CD8-positive, alpha-beta T cell (primary cell): ENCODE measurements at regions of chr14 and their contacts with region 1.

Region 1: GRCh38 chr14:94180655-94181271 is 6.6 kb downstream of the PPP4R4 start:
- DNase-seq: peak in 3 of 9 experiments; percentile 32 to 76 (median 68)
- ATAC-seq: peak; percentile 86
- H3K4me3 ChIP-seq: no peak overlapping the region
- H3K4me3 Mint-ChIP-seq: peak overlapping the region; percentile 49
- H3K27ac ChIP-seq: no peak overlapping the region
- H3K27ac Mint-ChIP-seq: peak overlapping the region; percentile 63
- H3K4me1 ChIP-seq: no peaks in the 10 kb centered on the region
- H3K4me1 Mint-ChIP-seq: peaks cover 9% of the 10 kb centered on the region
- H3K27me3 ChIP-seq: peaks cover 0 to 2% of the 10 kb centered on the region in 2 experiments
- H3K27me3 Mint-ChIP-seq: peaks cover 15% of the 10 kb centered on the region
- CTCF ChIP-seq: peak; percentile 81

Region 2: GRCh38 chr14:93332853-93333630 is 847.7 kb before region 1 on chr14 and contains the start of gene BTBD7:
- CTCF ChIA-PET with region 1: no interaction called
- POLR2A ChIA-PET with region 1: no interaction called
- intact Hi-C with region 1: loop called in 1 of 2 experiments (anchors 10 kb)
- DNase-seq: peak; percentile 87 to 98 (median 94)
- ATAC-seq: peak; percentile 92
- H3K4me3 ChIP-seq: peak within 1 kb of the TSS; percentile 81 to 85
- H3K4me3 Mint-ChIP-seq: peak within 1 kb of the TSS; percentile 95
- H3K27ac ChIP-seq: peak within 1 kb of the TSS; percentile 80 to 83
- H3K27ac Mint-ChIP-seq: peak within 1 kb of the TSS; percentile 95
- H3K4me1 ChIP-seq: peaks cover 27% of the 10 kb centered on the region
- H3K4me1 Mint-ChIP-seq: peaks cover 50% of the 10 kb centered on the region
- H3K27me3 ChIP-seq: no peaks in the 10 kb centered on the region
- H3K27me3 Mint-ChIP-seq: no peaks in the 10 kb centered on the region
- CTCF ChIP-seq: no peak
- total RNA-seq, gene BTBD7: 22.9 to 23.5 TPM

Region 3: DNA sequence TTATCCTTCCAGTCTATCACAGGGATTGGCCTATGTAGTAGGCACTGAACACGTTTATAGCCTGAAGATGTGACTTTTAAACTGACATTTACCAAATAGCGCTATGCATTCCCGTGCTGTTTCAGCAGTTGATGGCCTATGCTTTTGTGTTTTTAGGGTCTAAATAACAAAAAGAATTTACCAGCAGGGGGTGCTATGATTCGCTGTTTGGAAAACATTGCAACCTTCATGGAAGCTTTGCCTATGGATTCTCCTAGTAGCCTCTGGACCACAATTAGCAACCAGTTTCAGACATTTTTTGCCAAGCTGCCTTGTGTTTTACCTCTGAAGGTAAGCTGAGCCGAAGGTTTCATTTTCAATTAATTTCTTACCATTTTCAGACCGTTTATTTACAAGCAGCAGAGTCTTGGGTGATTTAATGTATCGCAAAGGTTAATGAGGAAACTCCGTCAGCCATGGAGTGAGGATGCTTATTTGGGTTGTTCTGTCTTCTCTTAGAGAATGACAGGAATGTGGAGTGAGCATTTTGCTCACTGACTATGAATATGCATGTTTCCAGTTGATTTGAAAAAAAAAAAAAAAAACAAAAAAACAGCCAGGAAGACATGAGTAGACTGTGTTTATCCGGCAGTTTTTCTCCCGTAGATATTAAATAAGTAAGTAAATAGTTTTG is 525.5 kb before region 1 on chr14:
- CTCF ChIA-PET with region 1: no interaction called
- POLR2A ChIA-PET with region 1: no interaction called
- intact Hi-C with region 1: loop called in 1 of 2 experiments (anchors 10 kb)
- DNase-seq: peak in 2 of 9 experiments; percentile 4 to 6
- ATAC-seq: no peak
- H3K4me3 ChIP-seq: no peak overlapping the region
- H3K4me3 Mint-ChIP-seq: no peak overlapping the region
- H3K27ac ChIP-seq: no peak overlapping the region
- H3K27ac Mint-ChIP-seq: no peak overlapping the region
- H3K4me1 ChIP-seq: no peaks in the 10 kb centered on the region
- H3K4me1 Mint-ChIP-seq: no peaks in the 10 kb centered on the region
- H3K27me3 ChIP-seq: peaks cover 3 to 8% of the 10 kb centered on the region in 2 experiments
- H3K27me3 Mint-ChIP-seq: peaks cover 25% of the 10 kb centered on the region
- CTCF ChIP-seq: no peak

Region 4: DNA sequence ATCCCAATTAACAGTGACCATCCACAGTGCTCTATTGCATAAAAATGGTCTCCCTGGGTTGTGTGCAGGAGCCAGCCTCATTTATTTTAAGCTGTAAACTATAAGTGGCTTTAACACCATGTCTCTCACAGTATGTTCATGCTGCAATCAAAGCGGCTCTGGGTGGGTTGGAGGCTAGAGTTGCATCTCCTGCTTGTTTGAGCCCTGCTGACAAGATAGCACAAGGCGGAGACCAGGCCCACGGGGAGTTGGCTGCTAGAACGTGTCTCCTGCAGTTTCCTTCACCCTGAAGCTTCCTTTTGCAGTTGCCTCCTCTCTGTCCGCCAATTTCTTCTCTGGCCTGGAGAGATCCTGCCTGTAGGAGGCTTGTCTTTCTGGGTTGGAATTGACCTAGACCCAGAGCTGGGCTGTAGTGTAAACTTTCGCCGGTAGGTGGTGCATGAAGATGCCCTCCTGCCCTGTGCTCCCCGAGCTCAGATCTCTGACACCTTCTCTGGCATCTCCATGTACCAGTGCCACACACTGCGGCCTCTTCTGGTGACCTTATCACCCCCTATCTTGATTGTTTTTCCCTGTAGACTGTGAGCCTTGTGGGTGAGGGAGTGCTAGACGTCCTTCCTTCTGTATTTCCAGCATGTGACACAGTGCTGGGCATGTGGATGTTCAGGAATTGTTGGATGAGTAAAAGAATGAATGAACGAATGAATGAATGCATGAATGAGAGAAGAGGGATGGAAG is 144.3 kb before region 1 on chr14:
- CTCF ChIA-PET with region 1: interaction called, 116 read pairs
- POLR2A ChIA-PET with region 1: interaction called, 3 read pairs
- intact Hi-C with region 1: loop called (anchors 1 kb)
- DNase-seq: peak; percentile 52 to 84 (median 78)
- ATAC-seq: peak; percentile 99
- H3K4me3 ChIP-seq: no peak overlapping the region
- H3K4me3 Mint-ChIP-seq: no peak overlapping the region
- H3K27ac ChIP-seq: no peak overlapping the region
- H3K27ac Mint-ChIP-seq: no peak overlapping the region
- H3K4me1 ChIP-seq: no peaks in the 10 kb centered on the region
- H3K4me1 Mint-ChIP-seq: peaks cover 3% of the 10 kb centered on the region
- H3K27me3 ChIP-seq: no peaks in the 10 kb centered on the region
- H3K27me3 Mint-ChIP-seq: no peaks in the 10 kb centered on the region
- CTCF ChIP-seq: peak; percentile 82

Region 5: GRCh38 chr14:94161981-94162380 is 18.8 kb before region 1 on chr14:
- CTCF ChIA-PET with region 1: interaction called, 15 read pairs
- POLR2A ChIA-PET with region 1: no interaction called
- intact Hi-C with region 1: no loop called
- DNase-seq: peak in 1 of 9 experiments; percentile 8
- ATAC-seq: no peak
- H3K4me3 ChIP-seq: no peak overlapping the region
- H3K4me3 Mint-ChIP-seq: no peak overlapping the region
- H3K27ac ChIP-seq: no peak overlapping the region
- H3K27ac Mint-ChIP-seq: no peak overlapping the region
- H3K4me1 ChIP-seq: peaks cover 39% of the 10 kb centered on the region
- H3K4me1 Mint-ChIP-seq: peaks cover 37% of the 10 kb centered on the region
- H3K27me3 ChIP-seq: no peaks in the 10 kb centered on the region
- H3K27me3 Mint-ChIP-seq: peaks cover 7% of the 10 kb centered on the region
- CTCF ChIP-seq: no peak

Region 6: DNA sequence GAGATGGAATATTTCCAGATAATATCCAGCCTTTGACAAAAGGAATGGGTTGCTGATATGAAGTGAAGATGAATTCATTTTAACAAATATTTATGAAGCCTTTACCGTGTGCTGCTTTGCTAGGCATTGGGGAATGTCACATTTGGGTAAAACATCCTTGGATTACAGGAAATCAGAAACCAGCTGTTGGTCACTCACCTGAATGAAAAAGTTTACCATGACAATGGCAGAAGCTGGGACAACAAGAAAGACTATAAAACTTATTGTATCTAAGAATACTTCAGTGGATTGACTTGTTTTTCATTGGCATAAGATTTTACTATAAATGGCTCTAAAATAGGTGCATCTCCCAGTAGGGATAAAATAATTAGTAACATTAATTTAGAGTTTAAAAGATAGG is 13.0 kb after region 1 on chr14:
- CTCF ChIA-PET with region 1: interaction called, 10 read pairs
- POLR2A ChIA-PET with region 1: no interaction called
- intact Hi-C with region 1: no loop called
- DNase-seq: no peak
- ATAC-seq: no peak
- H3K4me3 ChIP-seq: no peak overlapping the region
- H3K4me3 Mint-ChIP-seq: no peak overlapping the region
- H3K27ac ChIP-seq: no peak overlapping the region
- H3K27ac Mint-ChIP-seq: no peak overlapping the region
- H3K4me1 ChIP-seq: no peaks in the 10 kb centered on the region
- H3K4me1 Mint-ChIP-seq: no peaks in the 10 kb centered on the region
- H3K27me3 ChIP-seq: peaks cover 0 to 10% of the 10 kb centered on the region in 2 experiments
- H3K27me3 Mint-ChIP-seq: peaks cover 43% of the 10 kb centered on the region
- CTCF ChIP-seq: no peak